Uterus (tissue), 4 donors: ENCODE measurements at regions of chr2 and their contacts with region 1.

Region 1: DNA sequence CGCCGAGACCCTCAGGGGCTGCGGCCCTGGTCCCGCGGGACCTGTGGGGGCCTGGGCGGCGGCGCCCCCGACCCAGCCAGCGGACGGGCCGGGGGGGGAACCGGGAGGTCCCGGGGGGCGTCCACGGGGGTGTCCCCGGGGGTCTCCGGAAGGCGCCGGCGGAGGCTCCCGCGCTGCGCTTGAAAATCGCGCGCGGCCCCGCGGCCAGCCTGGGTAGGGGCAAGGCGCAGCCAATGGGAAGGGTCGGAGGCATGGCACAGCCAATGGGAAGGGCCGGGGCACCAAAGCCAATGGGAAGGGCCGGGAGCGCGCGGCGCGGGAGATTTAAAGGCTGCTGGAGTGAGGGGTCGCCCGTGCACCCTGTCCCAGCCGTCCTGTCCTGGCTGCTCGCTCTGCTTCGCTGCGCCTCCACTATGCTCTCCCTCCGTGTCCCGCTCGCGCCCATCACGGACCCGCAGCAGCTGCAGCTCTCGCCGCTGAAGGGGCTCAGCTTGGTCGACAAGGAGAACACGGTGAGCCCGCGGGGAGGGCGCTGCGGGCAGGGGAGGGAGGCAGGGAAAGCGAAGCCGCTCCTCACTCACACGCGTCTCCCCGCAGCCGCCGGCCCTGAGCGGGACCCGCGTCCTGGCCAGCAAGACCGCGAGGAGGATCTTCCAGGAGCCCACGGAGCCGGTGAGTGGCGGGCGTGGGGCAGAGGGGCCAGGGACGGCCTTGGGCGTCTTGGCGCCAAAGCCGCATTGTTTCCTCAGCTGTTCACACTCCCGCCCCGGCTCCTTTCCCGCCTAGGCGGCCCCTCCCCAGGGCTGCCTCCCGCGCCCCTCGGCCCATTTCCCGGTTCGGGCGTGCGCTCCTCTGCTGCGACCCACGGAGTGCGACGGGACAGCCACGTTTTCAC is at the start of gene RRM2:
- DNase-seq: peak; percentile 89 to 92
- H3K4me3 ChIP-seq: peak within 1 kb of the TSS; percentile 17 to 40
- H3K27ac ChIP-seq: no peak within 1 kb of the TSS
- H3K4me1 ChIP-seq: peaks cover 0 to 19% of the 10 kb centered on the region in 2 donors
- H3K27me3 ChIP-seq: peaks cover 12 to 13% of the 10 kb centered on the region in 2 donors
- CTCF ChIP-seq: peak in 1 of 4 experiments; percentile 17
- POLR2A ChIP-seq: no peak
- total RNA-seq, gene RRM2: 27.2 TPM in 1 of 4 donors, not detected in the others

Region 2: GRCh38 chr2:10239561-10239967 is 116.9 kb after region 1 on chr2:
- intact Hi-C with region 1: no loop called
- DNase-seq: peak; percentile 40 to 50
- H3K4me3 ChIP-seq: no peak overlapping the region
- H3K27ac ChIP-seq: no peak overlapping the region
- H3K4me1 ChIP-seq: no peaks in the 10 kb centered on the region
- H3K27me3 ChIP-seq: no peaks in the 10 kb centered on the region
- CTCF ChIP-seq: peak in 2 of 4 experiments; percentile 2 to 25
- POLR2A ChIP-seq: no peak

Region 3: DNA sequence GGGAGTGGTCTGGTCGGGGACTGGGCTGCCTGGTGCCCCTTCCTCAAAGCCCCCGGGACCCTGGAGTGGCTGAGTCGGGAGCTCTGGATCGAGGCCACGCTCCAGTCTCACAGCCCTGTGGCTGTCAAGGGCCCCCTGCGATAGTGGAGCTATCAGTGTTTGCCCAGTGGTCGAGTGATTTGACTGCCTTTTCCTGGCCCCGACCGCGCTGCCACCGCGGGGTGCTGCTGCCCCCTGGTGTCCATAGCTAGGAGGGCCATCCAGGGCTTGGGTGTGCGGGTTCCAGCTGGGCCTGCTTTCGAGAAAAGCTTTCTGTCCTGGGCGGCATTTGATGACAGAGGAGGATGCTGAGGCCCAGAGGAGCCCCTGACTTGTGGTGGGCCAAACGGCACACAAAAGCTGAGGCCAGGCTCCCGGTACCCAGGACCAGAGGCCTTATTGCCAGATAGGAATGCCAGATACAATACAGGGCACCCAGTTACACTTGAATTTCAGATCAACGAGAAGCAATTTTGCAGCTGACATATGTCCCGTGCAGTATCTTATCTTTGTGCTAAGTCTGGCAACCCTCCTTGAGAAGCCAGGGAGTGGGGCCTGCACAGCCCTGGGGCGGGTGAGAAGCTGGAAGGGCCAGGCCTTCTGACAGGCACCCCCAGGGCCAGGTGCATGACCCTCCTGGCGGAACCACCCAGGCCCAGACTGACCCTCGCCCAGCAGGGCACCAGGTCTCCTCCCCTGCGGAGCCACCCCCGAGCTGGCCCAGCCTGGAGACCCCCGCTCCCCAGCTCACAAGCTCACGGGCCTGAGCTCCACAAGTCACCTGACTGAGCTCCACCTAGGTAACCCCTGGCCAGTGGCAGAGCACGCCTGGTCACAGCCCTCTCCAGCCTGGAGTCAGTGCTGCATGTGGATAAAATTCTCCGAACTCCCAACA is 312.5 kb after region 1 on chr2:
- intact Hi-C with region 1: loop called (anchors 2 kb)
- DNase-seq: peak; percentile 72 to 80
- H3K4me3 ChIP-seq: no peak overlapping the region
- H3K27ac ChIP-seq: no peak overlapping the region
- H3K4me1 ChIP-seq: no peaks in the 10 kb centered on the region
- H3K27me3 ChIP-seq: no peaks in the 10 kb centered on the region
- CTCF ChIP-seq: peak; percentile 96 to 99 (median 98)
- POLR2A ChIP-seq: no peak